Aorta (tissue), 5 donors: ENCODE measurements at regions of chr10 and their contacts with region 1.

Region 1: GRCh38 chr10:69269761-69270160 is 8.5 kb upstream of the HK1 start:
- DNase-seq: no peak
- ATAC-seq: no peak
- H3K4me3 ChIP-seq: no peak overlapping the region
- H3K27ac ChIP-seq: no peak overlapping the region
- H3K4me1 ChIP-seq: no peaks in the 10 kb centered on the region
- H3K27me3 ChIP-seq: no peaks in the 10 kb centered on the region

Region 2: GRCh38 chr10:69303632-69304051 is 33.9 kb after region 1 on chr10:
- intact Hi-C with region 1: loop called in 1 of 2 experiments (anchors 5 kb)
- DNase-seq: peak in 1 of 2 donors; percentile 57
- ATAC-seq: no peak
- H3K4me3 ChIP-seq: no peak overlapping the region
- H3K27ac ChIP-seq: no peak overlapping the region
- H3K4me1 ChIP-seq: no peaks in the 10 kb centered on the region
- H3K27me3 ChIP-seq: no peaks in the 10 kb centered on the region

Region 3: GRCh38 chr10:69383558-69383957 is 113.8 kb after region 1 on chr10:
- intact Hi-C with region 1: no loop called
- DNase-seq: no peak
- ATAC-seq: peak; percentile 52
- H3K4me3 ChIP-seq: no peak overlapping the region
- H3K27ac ChIP-seq: peak overlapping the region in 1 of 2 donors; percentile 7
- H3K4me1 ChIP-seq: no peaks in the 10 kb centered on the region
- H3K27me3 ChIP-seq: no peaks in the 10 kb centered on the region